CD8-positive, alpha-beta T cell (primary cell): ENCODE measurements at regions of chr16 and their contacts with region 1.

Region 1: DNA sequence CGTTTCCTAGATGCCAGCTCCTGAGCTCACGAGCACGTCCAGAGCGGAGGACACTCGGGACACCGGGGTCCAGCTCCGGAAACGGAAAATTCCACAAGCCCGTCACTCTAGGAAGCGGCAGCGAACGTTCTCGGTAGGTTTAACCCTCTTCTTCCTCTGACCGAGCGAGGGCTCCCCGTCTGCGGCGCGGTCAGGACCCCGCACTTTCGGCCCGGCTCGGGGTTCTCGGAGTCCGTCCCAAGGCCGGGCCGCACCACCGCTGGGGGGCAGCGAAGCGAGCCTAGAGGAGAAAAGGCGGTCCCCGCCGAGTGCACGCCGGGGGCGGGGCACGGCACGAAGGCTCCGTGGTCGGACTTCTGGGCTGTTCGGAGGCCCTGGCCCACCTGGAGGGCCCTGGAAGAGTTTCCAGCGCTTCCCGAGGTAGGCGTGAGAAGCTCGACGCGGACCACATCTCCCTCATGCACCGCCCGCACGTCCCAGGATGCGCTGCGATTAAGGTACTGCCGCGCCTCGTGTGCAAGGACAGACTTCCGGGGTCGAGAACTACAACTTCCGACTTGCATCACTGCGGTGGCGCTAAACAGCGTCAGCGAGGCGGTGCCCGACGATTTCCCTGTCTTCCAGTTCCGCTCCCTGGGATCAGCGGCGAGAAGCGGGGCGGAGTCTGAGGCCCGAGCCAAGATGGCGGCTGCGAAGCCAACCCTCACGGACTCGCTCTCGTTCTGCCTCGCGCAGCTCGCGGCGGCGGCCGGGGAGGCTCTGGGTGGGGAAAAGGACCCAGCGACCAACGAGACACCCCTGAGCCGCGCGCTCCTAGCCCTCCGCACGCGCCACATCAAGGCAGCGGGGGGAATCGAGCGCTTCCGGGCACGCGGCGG is at the start of gene ARMC5:
- DNase-seq: peak; percentile 91 to 99 (median 96)
- ATAC-seq: peak; percentile 69
- H3K4me3 ChIP-seq: peak within 1 kb of the TSS; percentile 73 to 99
- H3K4me3 Mint-ChIP-seq: peak within 1 kb of the TSS; percentile 95
- H3K27ac ChIP-seq: peak within 1 kb of the TSS; percentile 97 to 100
- H3K27ac Mint-ChIP-seq: peak within 1 kb of the TSS; percentile 99
- H3K4me1 ChIP-seq: peaks cover 40% of the 10 kb centered on the region
- H3K4me1 Mint-ChIP-seq: peaks cover 50% of the 10 kb centered on the region
- H3K27me3 ChIP-seq: no peaks in the 10 kb centered on the region
- H3K27me3 Mint-ChIP-seq: no peaks in the 10 kb centered on the region
- CTCF ChIP-seq: peak; percentile 44
- total RNA-seq, gene ARMC5: 22.4 to 24.0 TPM

Region 2: GRCh38 chr16:31032736-31033708 is 426.1 kb before region 1 on chr16 and contains the start of gene STX4:
- CTCF ChIA-PET with region 1: no interaction called
- POLR2A ChIA-PET with region 1: no interaction called
- intact Hi-C with region 1: loop called in 1 of 2 experiments (anchors 1 kb)
- DNase-seq: peak; percentile 93 to 100 (median 97)
- ATAC-seq: peak; percentile 73
- H3K4me3 ChIP-seq: peak within 1 kb of the TSS; percentile 84 to 88
- H3K4me3 Mint-ChIP-seq: peak within 1 kb of the TSS; percentile 98
- H3K27ac ChIP-seq: peak within 1 kb of the TSS; percentile 98 to 99
- H3K27ac Mint-ChIP-seq: peak within 1 kb of the TSS; percentile 99
- H3K4me1 ChIP-seq: peaks cover 18% of the 10 kb centered on the region
- H3K4me1 Mint-ChIP-seq: peaks cover 28% of the 10 kb centered on the region
- H3K27me3 ChIP-seq: no peaks in the 10 kb centered on the region
- H3K27me3 Mint-ChIP-seq: no peaks in the 10 kb centered on the region
- CTCF ChIP-seq: no peak
- total RNA-seq, gene STX4: 63.8 to 69.9 TPM

Region 3: DNA sequence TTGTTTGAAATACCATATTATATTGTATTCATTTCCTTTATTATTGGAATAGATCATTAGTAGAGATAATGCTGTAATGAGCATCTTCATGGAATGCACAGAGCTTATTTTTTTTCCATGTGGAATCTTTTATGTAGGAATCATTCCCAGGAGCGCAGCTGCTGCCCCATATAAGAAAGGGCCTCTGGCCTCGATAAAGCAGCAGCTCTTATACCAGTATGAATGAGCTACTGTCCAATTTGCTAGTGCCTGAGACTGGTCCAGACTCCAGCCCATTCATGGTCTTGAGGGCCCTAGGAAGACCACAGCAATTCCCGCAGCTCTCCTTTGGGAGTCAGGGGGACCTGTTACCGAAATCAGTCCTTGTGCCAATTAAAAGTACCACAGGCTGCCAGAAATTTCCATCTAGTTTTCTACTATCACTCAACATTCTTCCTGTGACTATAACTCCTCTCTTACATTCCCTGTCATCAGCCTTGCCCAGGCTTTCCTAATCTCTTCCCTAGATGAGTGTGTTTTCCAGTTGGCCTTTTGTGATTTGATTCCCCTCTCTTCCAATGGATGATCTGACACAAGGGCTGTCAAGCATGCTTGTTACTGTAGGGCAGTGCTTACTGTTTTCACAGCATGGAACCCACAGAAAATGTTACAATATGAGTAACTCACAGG is 18.4 kb before region 1 on chr16:
- CTCF ChIA-PET with region 1: interaction called, 9 read pairs
- POLR2A ChIA-PET with region 1: interaction called, 3 read pairs
- intact Hi-C with region 1: loop called in 1 of 2 experiments (anchors 1 kb)
- DNase-seq: no peak
- ATAC-seq: no peak
- H3K4me3 ChIP-seq: no peak overlapping the region
- H3K4me3 Mint-ChIP-seq: no peak overlapping the region
- H3K27ac ChIP-seq: no peak overlapping the region
- H3K27ac Mint-ChIP-seq: no peak overlapping the region
- H3K4me1 ChIP-seq: peaks cover 4% of the 10 kb centered on the region
- H3K4me1 Mint-ChIP-seq: peaks cover 6% of the 10 kb centered on the region
- H3K27me3 ChIP-seq: no peaks in the 10 kb centered on the region
- H3K27me3 Mint-ChIP-seq: no peaks in the 10 kb centered on the region
- CTCF ChIP-seq: no peak

Region 4: GRCh38 chr16:31487720-31488467 is 28.8 kb after region 1 on chr16:
- CTCF ChIA-PET with region 1: interaction called, 7 read pairs
- POLR2A ChIA-PET with region 1: interaction called, 22 read pairs
- intact Hi-C with region 1: loop called (anchors 1 kb)
- DNase-seq: peak; percentile 46 to 90 (median 78)
- ATAC-seq: peak; percentile 90
- H3K4me3 ChIP-seq: peak overlapping the region; percentile 71 to 86
- H3K4me3 Mint-ChIP-seq: peak overlapping the region; percentile 90
- H3K27ac ChIP-seq: peak overlapping the region; percentile 38 to 58
- H3K27ac Mint-ChIP-seq: peak overlapping the region; percentile 88
- H3K4me1 ChIP-seq: peaks cover 16% of the 10 kb centered on the region
- H3K4me1 Mint-ChIP-seq: peaks cover 11% of the 10 kb centered on the region
- H3K27me3 ChIP-seq: no peaks in the 10 kb centered on the region
- H3K27me3 Mint-ChIP-seq: no peaks in the 10 kb centered on the region
- CTCF ChIP-seq: no peak

Region 5: DNA sequence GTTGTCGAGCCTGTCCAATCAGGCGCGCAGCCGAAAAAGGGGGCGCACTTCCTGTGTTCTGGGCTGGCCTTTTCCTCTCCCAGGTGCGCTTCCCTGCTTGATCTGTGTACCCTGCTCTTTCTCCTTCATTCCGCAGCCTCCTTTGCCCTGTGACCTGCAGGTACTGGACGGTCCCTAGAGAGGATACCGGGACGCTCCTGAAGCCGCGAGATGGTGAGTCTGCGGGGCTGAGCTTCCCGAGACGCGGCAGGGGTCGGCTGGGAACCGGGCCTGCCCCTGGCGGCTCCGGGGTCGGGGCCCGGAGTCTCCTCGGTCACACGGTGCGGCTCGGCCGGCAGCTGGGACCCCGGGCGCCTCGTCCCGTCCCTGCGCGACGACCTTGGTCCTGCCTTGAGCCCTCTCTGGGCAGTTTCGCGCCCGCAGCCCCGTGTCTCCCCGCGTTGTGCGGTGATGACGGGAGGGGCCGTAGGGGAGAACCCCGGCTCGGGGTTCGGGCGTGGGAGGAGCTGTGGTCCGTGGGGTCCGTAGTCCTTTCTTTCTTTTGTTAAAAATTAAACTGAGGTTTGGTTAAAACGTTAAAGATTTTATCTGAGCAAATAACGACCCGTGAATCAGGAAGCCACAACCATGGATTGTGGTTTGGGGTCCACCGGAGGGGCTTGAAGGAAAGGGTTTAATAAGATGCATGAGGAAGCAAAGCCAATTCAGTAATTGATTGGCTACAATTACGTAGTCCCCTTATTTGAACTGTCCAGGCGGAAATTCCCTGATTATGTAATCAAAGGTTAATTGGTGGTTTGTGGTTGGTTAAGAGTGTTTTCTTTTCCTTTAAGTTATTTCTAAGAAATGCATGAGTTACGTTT is 241.7 kb after region 1 on chr16:
- CTCF ChIA-PET with region 1: interaction called, 8 read pairs
- POLR2A ChIA-PET with region 1: interaction called, 7 read pairs
- intact Hi-C with region 1: loop called (anchors 1 to 2 kb)
- DNase-seq: peak; percentile 79 to 94 (median 90)
- ATAC-seq: peak; percentile 86
- H3K4me3 ChIP-seq: peak overlapping the region; percentile 76 to 94
- H3K4me3 Mint-ChIP-seq: peak overlapping the region; percentile 95
- H3K27ac ChIP-seq: peak overlapping the region; percentile 90 to 91
- H3K27ac Mint-ChIP-seq: peak overlapping the region; percentile 97
- H3K4me1 ChIP-seq: peaks cover 28% of the 10 kb centered on the region
- H3K4me1 Mint-ChIP-seq: peaks cover 31% of the 10 kb centered on the region
- H3K27me3 ChIP-seq: no peaks in the 10 kb centered on the region
- H3K27me3 Mint-ChIP-seq: no peaks in the 10 kb centered on the region
- CTCF ChIP-seq: no peak